Ovary (tissue), 10 donors: ENCODE measurements at regions of chr7 and their contacts with region 1.

Region 1: GRCh38 chr7:135662373-135663114 is at the start of gene STMP1:
- DNase-seq: peak; percentile 95 to 98 (median 98)
- H3K4me3 ChIP-seq: peak within 1 kb of the TSS; percentile 62
- H3K27ac ChIP-seq: peak within 1 kb of the TSS; percentile 81 to 86
- H3K4me1 ChIP-seq: peaks cover 3% of the 10 kb centered on the region
- H3K27me3 ChIP-seq: no peaks in the 10 kb centered on the region
- CTCF ChIP-seq: peak in 1 of 3 donors; percentile 77
- EP300 ChIP-seq: no peak
- POLR2A ChIP-seq: peak; percentile 85
- total RNA-seq, gene STMP1: 11.0 to 24.3 (median 19.7) TPM

Region 2: GRCh38 chr7:135977007-135977741 is 314.6 kb after region 1 on chr7 and contains the start of gene MTPN:
- intact Hi-C with region 1: loop called in 2 of 4 experiments (anchors 10 kb)
- DNase-seq: peak; percentile 97 to 99 (median 98)
- H3K4me3 ChIP-seq: peak within 1 kb of the TSS; percentile 96
- H3K27ac ChIP-seq: peak within 1 kb of the TSS in 1 of 2 donors; percentile 47
- H3K4me1 ChIP-seq: peaks cover 6% of the 10 kb centered on the region
- H3K27me3 ChIP-seq: no peaks in the 10 kb centered on the region
- CTCF ChIP-seq: no peak
- EP300 ChIP-seq: no peak
- POLR2A ChIP-seq: peak; percentile 25
- total RNA-seq, gene MTPN: 54.0 to 105 (median 83.8) TPM